H1 (cell line): ENCODE measurements at regions of chr14 and their contacts with region 1.

Region 1: GRCh38 chr14:20469242-20469889 is at the start of gene PNP:
- DNase-seq: peak; percentile 78 to 96
- H3K4me3 ChIP-seq: peak within 1 kb of the TSS; percentile 85 to 97 (median 90)
- H3K27ac ChIP-seq: peak within 1 kb of the TSS; percentile 63
- H3K4me1 ChIP-seq: peaks cover 0 to 5% (median 2%) of the 10 kb centered on the region in 4 experiments; a peak in 3 of 7 replicates
- H3K27me3 ChIP-seq: no peaks in the 10 kb centered on the region; a peak in 1 of 7 replicates
- CTCF ChIP-seq: no peak
- EP300 ChIP-seq: no peak
- POLR2A ChIP-seq: peak; percentile 99 to 100
- RAD21 ChIP-seq: no peak; a peak in 1 of 4 replicates
- total RNA-seq, gene PNP: 108 and 110 TPM in 2 replicates

Region 2: DNA sequence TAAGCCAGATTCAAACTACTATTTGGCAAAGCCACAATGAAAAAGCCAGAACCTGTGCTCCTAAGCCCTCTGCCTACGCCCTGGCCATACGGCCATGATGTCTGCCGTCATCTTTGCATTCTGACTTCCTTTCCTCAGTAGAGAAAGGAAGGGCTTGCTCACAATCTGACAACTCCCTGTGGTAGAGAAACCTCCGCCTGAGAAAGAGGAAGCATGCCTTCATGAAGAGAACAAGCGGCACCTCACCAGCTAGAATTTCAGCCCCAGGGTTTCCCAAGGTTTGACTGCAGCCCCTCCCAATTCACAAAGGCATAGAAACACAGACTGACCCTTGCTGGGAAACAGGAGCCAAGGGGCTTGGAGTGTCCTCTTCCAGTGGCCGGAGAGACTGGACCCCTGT is 81.8 kb before region 1 on chr14:
- CTCF ChIA-PET with region 1: no interaction called
- POLR2A ChIA-PET with region 1: no interaction called
- DNase-seq: no peak
- H3K4me3 ChIP-seq: no peak overlapping the region
- H3K27ac ChIP-seq: no peak overlapping the region
- H3K4me1 ChIP-seq: no peaks in the 10 kb centered on the region
- H3K27me3 ChIP-seq: no peaks in the 10 kb centered on the region; a peak in 1 of 7 replicates
- CTCF ChIP-seq: no peak
- EP300 ChIP-seq: no peak
- POLR2A ChIP-seq: no peak
- RAD21 ChIP-seq: no peak

Region 3: DNA sequence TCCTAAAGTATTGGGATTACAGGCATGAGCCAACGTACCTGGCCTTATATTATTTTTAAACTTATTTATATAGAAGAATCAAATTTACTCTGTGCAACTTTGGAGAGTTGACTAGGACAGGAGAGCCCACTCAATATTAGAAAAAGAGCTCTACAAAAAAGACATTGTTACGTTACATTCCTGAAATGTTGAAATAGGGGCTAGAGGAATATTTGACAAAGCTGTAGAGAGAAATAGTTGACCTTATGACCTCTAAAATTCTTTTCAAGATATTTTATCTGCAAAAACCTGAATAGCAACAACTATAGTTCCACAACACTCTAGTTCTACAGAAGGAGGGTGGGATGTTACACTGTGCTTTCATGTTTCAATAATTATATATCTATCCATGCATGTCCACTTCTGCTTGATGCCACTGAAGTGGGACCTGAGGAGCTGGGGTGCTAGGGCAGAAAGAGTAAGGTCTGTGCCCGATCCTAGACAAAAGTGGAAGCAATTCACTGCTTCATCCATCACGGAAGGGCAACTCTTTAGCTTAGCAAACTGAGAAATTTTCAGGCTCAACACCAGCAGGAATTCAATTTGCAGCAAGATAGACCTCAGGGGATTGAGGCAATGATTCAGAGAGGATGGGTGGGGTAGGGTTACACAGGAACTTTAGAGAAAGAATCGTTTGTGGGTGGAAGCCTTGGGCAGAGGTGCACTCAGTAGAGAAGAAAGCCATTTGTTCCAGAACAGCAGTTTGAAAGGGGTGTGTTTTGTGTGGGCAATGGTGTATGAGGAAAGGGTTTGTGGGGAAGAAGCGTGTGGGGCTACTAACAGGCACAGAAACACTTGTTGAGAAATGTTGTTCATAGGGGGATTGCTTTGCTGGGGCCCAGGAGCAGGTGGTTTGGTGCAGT is 20.0 kb after region 1 on chr14:
- CTCF ChIA-PET with region 1: no interaction called
- POLR2A ChIA-PET with region 1: interaction called, 31 read pairs
- DNase-seq: no peak
- H3K4me3 ChIP-seq: no peak overlapping the region
- H3K27ac ChIP-seq: no peak overlapping the region
- H3K4me1 ChIP-seq: peaks cover 0 to 8% (median 3%) of the 10 kb centered on the region in 4 experiments; a peak in 2 of 7 replicates
- H3K27me3 ChIP-seq: no peaks in the 10 kb centered on the region
- CTCF ChIP-seq: no peak
- EP300 ChIP-seq: no peak
- POLR2A ChIP-seq: no peak
- RAD21 ChIP-seq: no peak

Region 4: GRCh38 chr14:20499108-20499507 is 29.7 kb after region 1 on chr14:
- CTCF ChIA-PET with region 1: no interaction called
- POLR2A ChIA-PET with region 1: interaction called, 13 read pairs
- DNase-seq: peak in 1 of 2 experiments; percentile 13
- H3K4me3 ChIP-seq: peak overlapping the region in 1 of 4 experiments; percentile 6; a peak in 1 of 8 replicates
- H3K27ac ChIP-seq: no peak overlapping the region
- H3K4me1 ChIP-seq: peaks cover 0 to 8% (median 3%) of the 10 kb centered on the region in 4 experiments; a peak in 6 of 7 replicates
- H3K27me3 ChIP-seq: no peaks in the 10 kb centered on the region
- CTCF ChIP-seq: no peak
- EP300 ChIP-seq: no peak
- POLR2A ChIP-seq: no peak
- RAD21 ChIP-seq: no peak